CD4-positive, alpha-beta memory T cell (primary cell): ENCODE measurements at regions of chr2 and their contacts with region 1.

Region 1: DNA sequence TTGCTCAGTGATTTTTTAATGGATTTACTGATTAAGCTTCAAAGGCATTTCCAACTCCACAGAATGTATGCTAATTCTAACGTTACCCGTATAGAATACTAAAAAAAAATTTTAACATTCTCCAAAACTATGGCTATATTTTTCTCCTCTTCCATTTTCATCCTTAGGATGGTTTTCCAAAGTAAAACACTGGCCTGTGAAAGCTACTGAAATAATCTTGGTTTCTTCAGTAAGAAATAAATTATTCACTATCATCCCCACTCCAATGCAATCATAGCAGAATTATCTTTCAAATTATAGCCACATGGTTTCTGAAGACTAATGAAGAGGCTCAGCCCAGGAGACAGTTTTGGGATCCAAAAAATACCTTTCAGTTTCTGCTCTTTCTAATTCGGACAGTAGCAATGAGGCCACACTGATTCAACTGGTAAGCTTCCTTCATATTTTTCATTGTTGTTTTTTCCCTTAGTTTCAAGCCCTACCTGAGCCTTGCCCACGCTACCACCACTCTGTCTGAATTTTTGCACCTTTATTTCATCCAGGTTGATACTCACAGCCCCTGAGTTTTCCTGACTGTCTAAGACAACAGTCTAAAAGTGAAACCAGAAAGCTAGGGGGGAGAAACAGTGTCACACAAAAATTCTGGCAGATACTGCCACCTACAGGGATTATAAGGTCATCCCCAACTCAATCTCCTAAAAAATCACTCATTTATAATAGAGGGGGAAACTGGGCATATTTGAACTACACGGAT is 887.9 kb downstream of the NRXN1 start:
- DNase-seq: peak in 2 of 5 donors; percentile 10 to 13
- H3K4me3 ChIP-seq: no peak overlapping the region
- H3K4me3 Mint-ChIP-seq: peak overlapping the region in 7 of 8 donors; percentile 27 to 82 (median 72)
- H3K27ac ChIP-seq: no peak overlapping the region
- H3K27ac Mint-ChIP-seq: peak overlapping the region in 4 of 7 donors; percentile 19 to 53 (median 32)
- H3K4me1 ChIP-seq: no peaks in the 10 kb centered on the region
- H3K4me1 Mint-ChIP-seq: peaks cover 0 to 2% (median 0%) of the 10 kb centered on the region in 4 donors
- H3K27me3 ChIP-seq: no peaks in the 10 kb centered on the region
- H3K27me3 Mint-ChIP-seq: no peaks in the 10 kb centered on the region

Region 2: GRCh38 chr2:48600204-48600813 is 1543.7 kb before region 1 on chr2:
- CTCF ChIA-PET with region 1: no interaction called
- POLR2A ChIA-PET with region 1: no interaction called
- intact Hi-C with region 1: loop called (anchors 10 kb)
- DNase-seq: peak in 4 of 5 donors; percentile 1 to 10 (median 6)
- H3K4me3 ChIP-seq: no peak overlapping the region
- H3K4me3 Mint-ChIP-seq: no peak overlapping the region
- H3K27ac ChIP-seq: no peak overlapping the region
- H3K27ac Mint-ChIP-seq: no peak overlapping the region
- H3K4me1 ChIP-seq: no peaks in the 10 kb centered on the region
- H3K4me1 Mint-ChIP-seq: no peaks in the 10 kb centered on the region
- H3K27me3 ChIP-seq: no peaks in the 10 kb centered on the region
- H3K27me3 Mint-ChIP-seq: no peaks in the 10 kb centered on the region